GM13976 (cell line): ENCODE measurements at regions of chr7 and their contacts with region 1.

Region 1: DNA sequence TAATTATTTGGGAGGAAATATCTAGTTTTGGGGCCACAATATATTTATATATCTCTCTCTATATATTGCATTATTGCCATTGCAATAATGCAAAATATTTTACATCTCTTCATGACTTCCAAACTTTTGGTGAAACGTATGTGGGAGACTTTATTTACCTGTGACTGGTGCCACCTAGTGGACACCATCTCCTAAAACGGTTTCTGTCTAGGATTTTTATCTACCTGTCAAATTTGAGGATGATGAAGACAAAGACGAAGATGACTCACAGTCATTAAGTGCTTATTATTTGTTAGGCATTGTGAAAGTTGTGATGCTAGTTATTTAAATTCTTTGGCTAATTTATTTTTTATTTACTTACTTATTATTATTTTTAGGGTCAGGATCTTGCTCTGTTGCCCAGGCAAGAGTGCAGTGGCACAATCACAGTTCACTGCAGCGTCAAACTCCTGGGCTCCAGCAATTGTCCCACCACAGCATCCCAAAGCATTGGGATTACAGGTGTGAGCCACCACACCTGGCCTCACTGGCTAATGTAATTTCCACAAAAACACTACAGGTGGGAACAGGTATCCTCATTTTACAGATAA is 18.7 kb upstream of the CBLL1 start:
- DNase-seq: peak; percentile 72
- CTCF ChIP-seq: peak; percentile 49

Region 2: DNA sequence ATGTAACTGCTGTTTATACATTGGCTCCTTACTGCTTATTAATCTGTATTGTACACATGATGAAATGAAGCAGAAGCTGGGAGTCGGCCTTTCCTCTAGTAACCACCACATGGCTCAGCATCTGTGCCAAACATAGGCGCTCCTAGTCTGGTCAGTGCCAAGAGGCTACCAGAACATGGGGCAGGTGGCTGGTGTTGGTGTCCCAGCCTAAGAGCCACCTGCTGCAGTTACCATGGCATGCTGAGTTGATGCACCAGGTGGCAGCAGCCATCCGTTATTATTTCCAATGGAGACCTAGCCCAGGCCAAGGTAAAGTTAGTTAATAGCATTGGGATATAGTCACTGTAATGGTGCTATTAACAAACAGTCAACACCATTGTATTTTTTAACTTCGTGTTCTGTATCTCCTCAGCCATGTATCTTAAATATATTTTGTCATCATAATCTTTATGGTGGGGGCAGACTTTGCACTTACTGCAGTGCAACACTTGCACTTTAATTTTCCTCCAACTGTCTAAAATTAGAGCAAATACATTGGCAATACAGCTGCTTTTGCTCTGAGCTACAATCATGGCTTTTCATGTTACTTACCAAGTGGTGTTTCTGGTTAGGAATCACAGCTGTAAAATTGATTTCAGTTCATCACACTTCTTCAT is 523.3 kb before region 1 on chr7:
- in situ Hi-C with region 1: loop called (anchors 10 kb)
- DNase-seq: peak; percentile 46
- CTCF ChIP-seq: peak; percentile 41

Region 3: DNA sequence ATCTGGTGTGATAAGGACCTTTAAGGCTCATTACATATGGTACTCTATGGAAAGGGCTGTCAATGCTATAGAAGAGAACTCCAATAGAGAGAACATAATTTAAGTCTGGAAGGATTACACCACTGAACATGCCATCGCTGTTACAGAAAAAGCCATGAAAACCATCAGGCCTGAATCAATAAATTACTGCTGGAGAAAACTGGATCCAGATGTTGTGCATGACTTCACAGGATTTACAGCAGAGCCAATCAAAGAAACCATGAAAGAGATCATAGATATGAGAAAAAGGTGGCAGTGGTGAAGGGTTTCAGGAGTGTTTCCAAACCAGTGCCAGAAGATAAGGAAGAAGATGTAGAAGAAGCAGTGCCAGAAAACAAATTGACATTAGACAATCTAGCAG is 274.3 kb before region 1 on chr7:
- in situ Hi-C with region 1: loop called (anchors 10 kb)
- DNase-seq: no peak
- CTCF ChIP-seq: no peak

Region 4: GRCh38 chr7:108000875-108001763 is 275.9 kb after region 1 on chr7:
- in situ Hi-C with region 1: no loop called
- DNase-seq: peak; percentile 20
- CTCF ChIP-seq: no peak